Mammary epithelial cell (primary cell): ENCODE measurements at regions of chr6 and their contacts with region 1.

Region 1: GRCh38 chr6:49453221-49453620 is 9.8 kb downstream of the MMUT start:
- DNase-seq: no peak
- H3K4me3 ChIP-seq: no peak overlapping the region
- H3K27ac ChIP-seq: no peak overlapping the region
- H3K4me1 ChIP-seq: no peaks in the 10 kb centered on the region
- H3K27me3 ChIP-seq: no peaks in the 10 kb centered on the region
- CTCF ChIP-seq: peak; percentile 3 to 30

Region 2: DNA sequence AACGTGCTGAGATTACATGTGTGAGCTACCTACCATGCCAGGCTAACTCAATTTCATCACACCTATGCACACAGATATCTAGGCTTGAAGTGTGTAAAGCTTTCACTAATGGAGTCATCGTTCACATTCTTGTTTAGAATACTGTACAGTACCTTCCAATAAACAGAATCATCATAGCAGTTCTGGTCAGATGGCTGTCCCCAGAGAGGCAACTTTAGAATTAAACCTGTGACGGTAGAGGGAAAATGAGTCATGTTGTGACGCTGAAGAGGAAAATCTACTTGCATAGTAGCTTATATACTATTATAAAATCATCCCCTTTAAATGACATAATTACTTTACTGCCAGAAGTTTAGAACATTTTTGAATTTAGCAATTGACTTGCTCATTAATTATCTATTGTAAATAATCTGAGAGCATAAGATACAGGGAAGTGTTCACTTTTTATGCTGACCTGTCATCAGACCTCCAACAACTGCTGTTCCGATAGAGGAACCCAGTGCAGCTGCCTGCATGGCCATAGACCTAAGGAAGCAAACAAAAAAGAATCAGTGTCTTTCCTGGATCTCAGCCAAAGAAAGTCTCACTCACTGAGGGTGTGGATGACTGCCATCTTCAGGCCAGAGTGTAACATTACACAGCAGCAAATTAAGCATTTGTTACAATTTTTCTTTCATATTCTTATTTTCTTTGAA is 153.6 kb after region 1 on chr6:
- CTCF ChIA-PET with region 1: interaction called, 4 read pairs
- dilution Hi-C with region 1: no loop called
- in situ Hi-C with region 1: no loop called
- intact Hi-C with region 1: loop called (anchors 1 kb)
- DNase-seq: peak; percentile 70
- H3K4me3 ChIP-seq: no peak overlapping the region
- H3K27ac ChIP-seq: no peak overlapping the region
- H3K4me1 ChIP-seq: peaks cover 2% of the 10 kb centered on the region
- H3K27me3 ChIP-seq: no peaks in the 10 kb centered on the region
- CTCF ChIP-seq: peak; percentile 83 to 84

Region 3: DNA sequence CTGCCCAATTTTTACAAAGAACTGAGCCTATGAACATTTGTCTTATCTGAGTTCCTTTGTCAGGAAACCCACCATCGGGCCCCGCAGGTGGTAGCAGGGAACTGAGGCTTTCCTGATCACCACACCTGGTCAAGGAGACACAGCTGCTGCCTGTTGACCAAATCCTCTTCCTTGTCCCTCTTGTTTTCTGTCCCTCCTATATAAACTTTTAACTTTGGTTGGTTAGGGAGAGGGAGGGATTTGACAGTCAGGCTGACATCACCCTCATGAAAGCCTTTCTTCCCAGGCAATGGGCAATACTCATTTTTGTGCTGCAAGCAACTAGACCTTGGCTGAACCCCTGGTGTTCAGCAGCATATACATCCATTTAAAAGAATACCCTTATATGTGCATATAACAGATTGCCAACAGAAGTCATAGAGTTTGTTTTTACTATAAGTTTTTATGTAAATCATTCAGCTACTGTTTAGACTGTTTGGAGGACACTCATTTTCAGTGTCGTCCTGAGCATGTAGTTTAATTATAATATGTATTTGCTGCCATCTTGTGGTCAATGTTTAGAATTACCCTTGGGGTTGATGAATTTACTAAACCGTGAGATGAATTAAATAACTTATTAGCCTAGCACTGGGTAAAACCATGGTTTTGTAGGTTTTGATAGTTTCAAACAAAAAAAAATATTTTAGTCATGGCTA is 396.1 kb after region 1 on chr6:
- CTCF ChIA-PET with region 1: no interaction called
- dilution Hi-C with region 1: no loop called
- in situ Hi-C with region 1: no loop called
- intact Hi-C with region 1: loop called (anchors 1 kb)
- DNase-seq: peak; percentile 20
- H3K4me3 ChIP-seq: no peak overlapping the region
- H3K27ac ChIP-seq: no peak overlapping the region
- H3K4me1 ChIP-seq: no peaks in the 10 kb centered on the region
- H3K27me3 ChIP-seq: no peaks in the 10 kb centered on the region
- CTCF ChIP-seq: peak; percentile 45 to 55